Activated CD4-positive, alpha-beta memory T cell treated with anti-CD3 and anti-CD28 coated beads, Interleukin-2, amount 10 ng/mL, durations not matched to agents 7 days and 5 days (primary cell): ENCODE measurements at regions of chr1 and their contacts with region 1.

Region 1: DNA sequence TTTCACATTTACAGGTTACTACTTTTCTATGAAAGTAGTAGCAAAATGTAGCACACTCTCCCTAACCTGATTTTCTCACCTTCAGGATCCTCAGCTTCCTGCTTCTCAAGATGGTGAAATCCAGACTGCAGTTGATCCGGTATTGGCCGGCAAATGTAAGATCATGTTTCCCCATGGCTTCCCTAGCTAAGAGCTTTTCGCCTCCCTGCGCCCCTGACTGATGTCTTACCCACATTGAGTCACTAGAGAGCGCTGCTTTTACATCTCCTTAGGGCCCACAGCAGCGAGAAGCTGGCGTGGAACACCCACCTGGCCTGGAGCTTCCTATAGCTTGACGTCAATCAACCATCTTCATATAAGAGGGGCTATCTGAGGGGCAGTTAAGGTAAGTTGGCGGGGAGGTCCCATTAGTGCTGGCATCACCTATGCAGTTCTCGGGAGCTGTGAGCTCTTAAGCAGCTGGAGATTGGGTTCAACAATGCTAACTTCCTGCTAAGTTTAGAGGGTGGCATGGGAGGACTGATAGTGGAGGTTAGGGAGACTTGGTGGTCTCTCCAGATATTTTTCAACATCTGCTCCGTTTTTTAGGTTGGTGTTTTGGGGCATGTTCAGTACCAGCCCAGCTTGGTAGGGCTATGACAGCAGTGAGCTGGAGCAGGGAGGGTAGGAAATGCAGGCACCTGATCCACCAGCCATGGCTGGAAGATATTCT is 5.5 kb downstream of the PTPN7 start:
- DNase-seq: peak; percentile 62
- H3K4me3 Mint-ChIP-seq: no peak overlapping the region
- H3K27ac Mint-ChIP-seq: peak overlapping the region; percentile 63
- H3K4me1 Mint-ChIP-seq: peaks cover 61% of the 10 kb centered on the region
- H3K27me3 Mint-ChIP-seq: no peaks in the 10 kb centered on the region

Region 2: DNA sequence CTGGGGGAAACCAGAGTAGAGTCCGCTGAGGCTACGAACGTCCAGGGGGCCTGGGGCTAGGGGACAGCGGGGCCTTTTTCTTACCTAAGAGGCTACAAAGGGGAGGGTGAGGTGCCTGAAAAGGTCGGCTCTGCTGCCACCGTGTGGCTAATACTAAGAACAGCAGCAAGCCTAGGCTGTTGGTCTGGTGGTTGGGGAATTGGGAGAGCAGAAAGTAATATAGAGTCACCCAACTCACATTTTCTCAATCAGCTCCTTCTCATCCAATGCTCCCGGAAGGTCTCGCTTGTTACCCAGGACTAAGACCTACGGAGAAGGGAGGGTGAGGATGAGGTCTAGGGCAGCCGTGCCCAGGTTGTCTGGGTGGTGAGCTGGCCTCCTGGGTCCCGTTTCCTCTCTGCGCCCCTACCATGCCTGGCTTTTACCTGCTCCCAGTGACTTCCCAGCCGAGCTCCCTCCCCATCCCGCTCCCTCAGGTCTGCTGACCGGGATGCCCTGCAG is 19.7 kb before region 1 on chr1:
- CTCF ChIA-PET with region 1: interaction called, 10 read pairs
- POLR2A ChIA-PET with region 1: interaction called, 4 read pairs
- DNase-seq: peak; percentile 61
- H3K4me3 Mint-ChIP-seq: no peak overlapping the region
- H3K27ac Mint-ChIP-seq: no peak overlapping the region
- H3K4me1 Mint-ChIP-seq: peaks cover 7% of the 10 kb centered on the region
- H3K27me3 Mint-ChIP-seq: no peaks in the 10 kb centered on the region

Region 3: GRCh38 chr1:202144402-202145067 is 10.4 kb before region 1 on chr1 and contains the start of gene ARL8A:
- CTCF ChIA-PET with region 1: interaction called, 17 read pairs
- POLR2A ChIA-PET with region 1: interaction called, 174 read pairs
- DNase-seq: peak; percentile 78
- H3K4me3 Mint-ChIP-seq: peak within 1 kb of the TSS; percentile 84
- H3K27ac Mint-ChIP-seq: peak within 1 kb of the TSS; percentile 87
- H3K4me1 Mint-ChIP-seq: peaks cover 41% of the 10 kb centered on the region
- H3K27me3 Mint-ChIP-seq: no peaks in the 10 kb centered on the region
- total RNA-seq, gene ARL8A: 62.4 to 63.8 TPM

Region 4: GRCh38 chr1:202170726-202171125 is 15.8 kb after region 1 on chr1:
- CTCF ChIA-PET with region 1: interaction called, 26 read pairs
- POLR2A ChIA-PET with region 1: interaction called, 174 read pairs
- DNase-seq: no peak
- H3K4me3 Mint-ChIP-seq: no peak overlapping the region
- H3K27ac Mint-ChIP-seq: no peak overlapping the region
- H3K4me1 Mint-ChIP-seq: peaks cover 23% of the 10 kb centered on the region
- H3K27me3 Mint-ChIP-seq: no peaks in the 10 kb centered on the region

Region 5: GRCh38 chr1:202184750-202185460 is 30.0 kb after region 1 on chr1:
- CTCF ChIA-PET with region 1: interaction called, 18 read pairs
- POLR2A ChIA-PET with region 1: interaction called, 7 read pairs
- DNase-seq: peak; percentile 71
- H3K4me3 Mint-ChIP-seq: no peak overlapping the region
- H3K27ac Mint-ChIP-seq: no peak overlapping the region
- H3K4me1 Mint-ChIP-seq: peaks cover 3% of the 10 kb centered on the region
- H3K27me3 Mint-ChIP-seq: peaks cover 6% of the 10 kb centered on the region

Region 6: DNA sequence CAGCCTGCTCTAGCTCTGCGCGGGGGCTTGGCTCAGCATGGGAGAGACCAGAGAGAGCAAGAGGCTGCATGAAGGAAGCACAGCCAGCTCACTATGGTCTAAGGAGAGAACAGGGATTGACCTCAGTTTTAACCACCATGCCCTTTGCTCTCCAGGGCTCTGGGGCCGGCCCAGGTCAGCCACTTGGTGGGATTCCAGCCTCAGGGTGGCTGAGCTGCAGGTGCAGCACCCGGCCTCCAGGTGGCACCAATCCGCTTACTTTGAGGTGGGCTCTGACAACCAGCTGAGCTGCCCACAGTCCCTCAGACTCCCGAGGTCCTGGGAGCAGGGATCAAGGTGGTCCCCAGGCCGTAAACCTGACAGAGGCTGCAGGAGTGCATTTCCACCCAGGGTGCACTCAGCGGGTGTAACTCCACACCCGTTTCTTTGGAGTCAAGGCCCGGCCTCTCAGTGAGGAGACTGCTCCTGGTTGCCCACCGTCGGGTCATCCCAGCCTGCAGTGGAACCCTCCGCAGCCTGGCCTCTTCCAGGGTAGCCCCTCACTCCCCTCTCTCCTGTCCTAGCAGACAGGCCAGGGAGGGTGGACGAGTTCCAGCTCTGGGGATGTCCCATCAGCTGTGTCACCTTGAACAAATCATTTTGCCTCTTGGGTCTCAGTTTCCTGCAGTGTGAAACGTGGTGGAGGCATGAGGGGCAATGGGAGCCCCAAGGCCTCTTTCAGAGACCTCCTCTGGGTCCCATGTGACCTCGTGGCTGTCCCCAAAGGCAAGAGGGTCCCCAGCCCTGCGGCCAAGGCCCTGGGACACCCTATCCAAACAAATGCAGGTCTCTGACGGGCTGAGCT is 38.1 kb after region 1 on chr1:
- CTCF ChIA-PET with region 1: interaction called, 10 read pairs
- POLR2A ChIA-PET with region 1: interaction called, 3 read pairs
- DNase-seq: peak; percentile 44
- H3K4me3 Mint-ChIP-seq: no peak overlapping the region
- H3K27ac Mint-ChIP-seq: no peak overlapping the region
- H3K4me1 Mint-ChIP-seq: no peaks in the 10 kb centered on the region
- H3K27me3 Mint-ChIP-seq: peaks cover 29% of the 10 kb centered on the region

Region 7: DNA sequence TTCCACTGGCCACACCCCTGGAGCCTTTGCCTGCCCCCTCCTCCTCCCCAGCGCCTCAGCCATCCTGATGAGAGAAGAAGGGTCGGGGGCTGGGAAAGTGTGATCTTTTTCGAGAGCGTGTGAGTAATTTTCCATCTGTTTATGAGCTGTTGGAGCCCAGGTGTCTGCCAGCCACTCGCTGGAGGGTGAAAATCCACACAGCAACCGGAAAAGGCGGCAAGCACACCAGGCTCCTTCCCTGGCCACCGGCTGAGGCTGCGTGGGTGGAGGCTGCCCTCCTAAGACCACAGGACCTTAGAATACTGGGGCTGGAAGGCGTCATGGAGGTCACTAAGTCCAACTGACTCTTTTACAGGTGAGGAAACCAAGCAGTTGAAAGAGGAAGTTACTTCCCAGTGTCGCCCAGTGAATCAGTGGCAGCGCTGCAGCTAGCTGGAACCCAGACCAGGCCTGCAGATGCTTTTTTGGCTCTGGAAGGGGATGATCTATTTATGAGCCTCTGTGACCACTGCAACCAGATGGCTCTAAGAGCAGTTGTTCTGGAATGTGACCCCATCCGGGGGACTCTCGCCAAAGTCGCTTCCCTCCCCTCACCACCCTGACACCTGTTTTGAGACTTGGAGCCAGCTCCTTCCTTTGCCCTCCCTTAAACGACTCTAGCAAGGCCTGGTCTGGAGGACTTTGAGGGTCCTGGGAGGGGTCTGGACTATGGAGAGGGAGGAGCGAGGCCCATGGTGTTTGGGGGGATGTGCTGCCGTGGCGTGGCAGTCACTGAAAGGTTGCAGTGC is 93.2 kb after region 1 on chr1:
- CTCF ChIA-PET with region 1: no interaction called
- POLR2A ChIA-PET with region 1: no interaction called
- DNase-seq: no peak
- H3K4me3 Mint-ChIP-seq: no peak overlapping the region
- H3K27ac Mint-ChIP-seq: no peak overlapping the region
- H3K4me1 Mint-ChIP-seq: no peaks in the 10 kb centered on the region
- H3K27me3 Mint-ChIP-seq: peaks cover 18% of the 10 kb centered on the region